ENCODE measurements at regions of chr16 and their contacts with region 1.

Region 1: GRCh38 chr16:58000706-58001676 is at the start of gene USB1:
- DNase-seq: peak; percentile 78 to 98 (median 86)

Region 2: DNA sequence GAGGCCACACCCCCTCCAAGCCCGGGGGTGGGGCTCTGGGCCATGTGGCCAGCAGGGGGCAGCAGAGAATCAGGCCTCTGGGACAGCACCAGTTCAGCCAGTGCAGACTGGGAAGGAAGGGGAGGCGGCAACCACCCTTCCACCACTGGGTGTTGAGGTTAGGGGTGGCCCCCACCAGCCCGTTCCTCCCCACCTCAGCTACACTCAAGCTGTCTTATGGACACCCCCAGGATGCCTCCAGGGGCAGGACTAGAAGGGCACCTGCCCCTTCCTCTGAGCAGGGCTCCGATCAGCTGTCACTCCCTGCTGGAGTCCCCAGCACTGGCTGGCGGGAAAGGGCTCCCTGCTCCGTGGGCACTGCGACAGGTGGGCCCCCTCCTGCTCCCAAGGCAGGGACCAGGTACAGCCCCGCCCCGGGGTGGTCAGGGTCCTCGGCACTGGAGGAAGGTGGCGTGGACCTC is 243.6 kb before region 1 on chr16:
- intact Hi-C with region 1: loop called (anchors 5 kb)
- DNase-seq: peak; percentile 73 to 98 (median 92)

Region 3: GRCh38 chr16:57899771-57900661 is 101.0 kb before region 1 on chr16:
- intact Hi-C with region 1: loop called (anchors 1 kb)
- DNase-seq: peak; percentile 61 to 97 (median 82)

Measured in posterior cingulate gyrus (tissue), 11 donors.